ENCODE measurements at regions of chr19 and their contacts with region 1.

Region 1: DNA sequence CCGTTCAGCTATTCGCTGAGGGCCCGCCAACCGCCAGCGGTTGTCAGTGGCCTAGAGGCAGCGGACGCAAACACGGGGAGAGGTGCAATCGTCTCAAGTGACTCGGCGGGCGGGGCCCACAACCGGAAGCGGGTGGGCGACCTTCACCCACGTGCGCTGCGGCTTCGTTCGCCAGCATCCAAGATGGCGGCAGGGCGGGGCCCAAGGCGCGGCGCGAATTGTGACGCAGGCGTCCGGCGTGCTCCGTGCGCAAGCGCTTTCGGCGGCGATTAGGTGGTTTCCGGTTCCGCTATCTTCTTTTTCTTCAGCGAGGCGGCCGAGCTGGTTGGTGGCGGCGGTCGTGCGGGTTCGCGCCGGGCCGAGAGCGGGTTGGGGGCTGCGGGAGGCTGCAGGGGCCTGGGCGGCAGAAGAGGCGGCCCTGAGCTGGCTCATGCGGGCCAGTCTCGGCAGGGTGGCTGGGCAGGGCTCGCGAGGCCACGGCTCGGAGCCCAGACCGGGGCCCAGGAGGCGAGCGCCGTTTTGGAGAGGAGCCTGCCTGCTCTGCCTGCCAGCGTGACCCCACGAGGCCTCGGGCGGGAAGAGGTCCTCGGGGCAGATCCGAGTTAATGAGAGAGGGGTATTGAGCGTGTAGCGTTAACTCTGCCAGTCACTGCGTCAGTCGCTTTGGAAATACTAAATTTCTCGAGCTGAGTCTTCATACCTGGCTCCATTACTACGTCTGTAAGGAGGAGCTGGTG is at the start of gene UBA52:
- DNase-seq: peak; percentile 95 to 100 (median 98)
- ATAC-seq: peak; percentile 94 to 96 (median 95)
- H3K4me3 ChIP-seq: peak within 1 kb of the TSS; percentile 90 to 96
- H3K4me3 Mint-ChIP-seq: peak within 1 kb of the TSS; percentile 85 to 94 (median 93)
- H3K27ac ChIP-seq: peak within 1 kb of the TSS; percentile 86
- H3K27ac Mint-ChIP-seq: peak within 1 kb of the TSS; percentile 92 to 94
- H3K4me1 ChIP-seq: peaks cover 11 to 27% of the 10 kb centered on the region in 2 experiments
- H3K4me1 Mint-ChIP-seq: peaks cover 20 to 23% (median 23%) of the 10 kb centered on the region in 3 donors
- H3K27me3 ChIP-seq: no peaks in the 10 kb centered on the region
- H3K27me3 Mint-ChIP-seq: no peaks in the 10 kb centered on the region
- total RNA-seq, gene UBA52: 1,917 to 2,053 (median 1,972) TPM

Region 2: GRCh38 chr19:18588611-18589379 is 17.1 kb after region 1 on chr19 and contains the start of gene REX1BD:
- CTCF ChIA-PET with region 1: interaction called in 1 of 2 experiments, 24 read pairs
- POLR2A ChIA-PET with region 1: interaction called in 1 of 2 experiments, 3 read pairs
- DNase-seq: peak; percentile 73 to 91 (median 86)
- ATAC-seq: peak; percentile 81 to 85 (median 82)
- H3K4me3 ChIP-seq: peak within 1 kb of the TSS; percentile 77 to 78
- H3K4me3 Mint-ChIP-seq: peak within 1 kb of the TSS; percentile 79 to 88 (median 80)
- H3K27ac ChIP-seq: peak within 1 kb of the TSS; percentile 93
- H3K27ac Mint-ChIP-seq: peak within 1 kb of the TSS; percentile 93 to 95
- H3K4me1 ChIP-seq: peaks cover 16 to 46% of the 10 kb centered on the region in 2 experiments
- H3K4me1 Mint-ChIP-seq: peaks cover 35 to 46% (median 37%) of the 10 kb centered on the region in 3 donors
- H3K27me3 ChIP-seq: no peaks in the 10 kb centered on the region
- H3K27me3 Mint-ChIP-seq: no peaks in the 10 kb centered on the region
- total RNA-seq, gene REX1BD: 91.8 to 166 (median 150) TPM

Region 3: GRCh38 chr19:18672606-18673337 is 101.0 kb after region 1 on chr19:
- CTCF ChIA-PET with region 1: no interaction called
- POLR2A ChIA-PET with region 1: no interaction called
- DNase-seq: no peak
- ATAC-seq: no peak
- H3K4me3 ChIP-seq: no peak overlapping the region
- H3K4me3 Mint-ChIP-seq: no peak overlapping the region
- H3K27ac ChIP-seq: no peak overlapping the region
- H3K27ac Mint-ChIP-seq: no peak overlapping the region
- H3K4me1 ChIP-seq: no peaks in the 10 kb centered on the region
- H3K4me1 Mint-ChIP-seq: no peaks in the 10 kb centered on the region
- H3K27me3 ChIP-seq: peaks cover 0 to 5% of the 10 kb centered on the region in 2 experiments
- H3K27me3 Mint-ChIP-seq: no peaks in the 10 kb centered on the region